CD4-positive, alpha-beta memory T cell (primary cell): ENCODE measurements at regions of chr1 and their contacts with region 1.

Region 1: GRCh38 chr1:227787513-227788270 is 27.8 kb upstream of the PRSS38 start:
- DNase-seq: peak; percentile 91 to 96 (median 93)
- H3K4me3 ChIP-seq: peak overlapping the region; percentile 69 to 89
- H3K4me3 Mint-ChIP-seq: peak overlapping the region; percentile 83 to 89 (median 84)
- H3K27ac ChIP-seq: peak overlapping the region; percentile 53
- H3K27ac Mint-ChIP-seq: peak overlapping the region; percentile 57 to 86 (median 83)
- H3K4me1 ChIP-seq: peaks cover 28% of the 10 kb centered on the region
- H3K4me1 Mint-ChIP-seq: peaks cover 13 to 46% (median 22%) of the 10 kb centered on the region in 4 donors
- H3K27me3 ChIP-seq: no peaks in the 10 kb centered on the region
- H3K27me3 Mint-ChIP-seq: no peaks in the 10 kb centered on the region

Region 2: DNA sequence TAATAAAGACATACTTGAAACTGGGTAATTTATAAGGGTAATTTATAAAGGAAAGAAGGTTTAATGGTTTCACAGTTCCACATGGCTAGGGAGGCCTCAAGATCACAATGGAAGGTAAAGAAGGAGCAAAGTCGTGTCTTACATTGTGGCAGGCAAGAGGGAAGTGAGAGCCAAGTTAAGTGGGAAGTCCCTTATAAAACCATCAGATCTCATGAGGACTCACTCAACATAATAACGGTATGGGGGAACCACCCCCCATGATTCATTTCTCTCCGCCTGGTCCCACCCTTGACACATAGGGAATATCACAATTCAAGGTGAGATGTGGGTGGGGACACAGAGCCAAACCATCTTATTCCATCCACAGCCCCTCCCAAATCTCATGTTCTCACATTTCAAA is 301.1 kb before region 1 on chr1:
- CTCF ChIA-PET with region 1: no interaction called
- POLR2A ChIA-PET with region 1: no interaction called
- intact Hi-C with region 1: no loop called
- DNase-seq: no peak
- H3K4me3 ChIP-seq: no peak overlapping the region
- H3K4me3 Mint-ChIP-seq: no peak overlapping the region
- H3K27ac ChIP-seq: no peak overlapping the region
- H3K27ac Mint-ChIP-seq: no peak overlapping the region
- H3K4me1 ChIP-seq: no peaks in the 10 kb centered on the region
- H3K4me1 Mint-ChIP-seq: no peaks in the 10 kb centered on the region
- H3K27me3 ChIP-seq: no peaks in the 10 kb centered on the region
- H3K27me3 Mint-ChIP-seq: peaks cover under 1 to 7% of the 10 kb centered on the region in 2 donors

Region 3: GRCh38 chr1:227734856-227735538 is 52.7 kb before region 1 on chr1 and contains the starts of genes JMJD4 and SNAP47:
- CTCF ChIA-PET with region 1: no interaction called
- POLR2A ChIA-PET with region 1: interaction called, 5 read pairs
- intact Hi-C with region 1: loop called (anchors 2 kb)
- DNase-seq: peak; percentile 88 to 97 (median 93)
- H3K4me3 ChIP-seq: peak within 1 kb of the TSS; percentile 69 to 80
- H3K4me3 Mint-ChIP-seq: peak within 1 kb of the TSS; percentile 89 to 93 (median 90)
- H3K27ac ChIP-seq: peak within 1 kb of the TSS; percentile 84
- H3K27ac Mint-ChIP-seq: peak within 1 kb of the TSS; percentile 88 to 94 (median 90)
- H3K4me1 ChIP-seq: peaks cover 39% of the 10 kb centered on the region
- H3K4me1 Mint-ChIP-seq: peaks cover 26 to 65% (median 39%) of the 10 kb centered on the region in 4 donors
- H3K27me3 ChIP-seq: no peaks in the 10 kb centered on the region
- H3K27me3 Mint-ChIP-seq: peaks cover 0 to 1% of the 10 kb centered on the region in 2 donors
- total RNA-seq, gene JMJD4: 32.4 to 34.1 TPM
- total RNA-seq, gene SNAP47: 27.0 to 30.5 TPM

Region 4: GRCh38 chr1:227753999-227754711 is 33.5 kb before region 1 on chr1:
- CTCF ChIA-PET with region 1: no interaction called
- POLR2A ChIA-PET with region 1: no interaction called
- intact Hi-C with region 1: no loop called
- DNase-seq: no peak
- H3K4me3 ChIP-seq: no peak overlapping the region
- H3K4me3 Mint-ChIP-seq: no peak overlapping the region
- H3K27ac ChIP-seq: no peak overlapping the region
- H3K27ac Mint-ChIP-seq: peak overlapping the region in 4 of 7 donors; percentile 7 to 73 (median 58)
- H3K4me1 ChIP-seq: peaks cover 24% of the 10 kb centered on the region
- H3K4me1 Mint-ChIP-seq: peaks cover 16 to 57% (median 31%) of the 10 kb centered on the region in 4 donors
- H3K27me3 ChIP-seq: no peaks in the 10 kb centered on the region
- H3K27me3 Mint-ChIP-seq: no peaks in the 10 kb centered on the region

Region 5: GRCh38 chr1:227849251-227849650 is 61.6 kb after region 1 on chr1:
- CTCF ChIA-PET with region 1: no interaction called
- POLR2A ChIA-PET with region 1: no interaction called
- intact Hi-C with region 1: no loop called
- DNase-seq: peak in 2 of 5 donors; percentile 12 to 21
- H3K4me3 ChIP-seq: no peak overlapping the region
- H3K4me3 Mint-ChIP-seq: no peak overlapping the region
- H3K27ac ChIP-seq: no peak overlapping the region
- H3K27ac Mint-ChIP-seq: peak overlapping the region in 4 of 7 donors; percentile 17 to 83 (median 55)
- H3K4me1 ChIP-seq: no peaks in the 10 kb centered on the region
- H3K4me1 Mint-ChIP-seq: peaks cover 0 to 4% (median 3%) of the 10 kb centered on the region in 4 donors
- H3K27me3 ChIP-seq: no peaks in the 10 kb centered on the region
- H3K27me3 Mint-ChIP-seq: peaks cover 0 to 7% of the 10 kb centered on the region in 2 donors

Region 6: DNA sequence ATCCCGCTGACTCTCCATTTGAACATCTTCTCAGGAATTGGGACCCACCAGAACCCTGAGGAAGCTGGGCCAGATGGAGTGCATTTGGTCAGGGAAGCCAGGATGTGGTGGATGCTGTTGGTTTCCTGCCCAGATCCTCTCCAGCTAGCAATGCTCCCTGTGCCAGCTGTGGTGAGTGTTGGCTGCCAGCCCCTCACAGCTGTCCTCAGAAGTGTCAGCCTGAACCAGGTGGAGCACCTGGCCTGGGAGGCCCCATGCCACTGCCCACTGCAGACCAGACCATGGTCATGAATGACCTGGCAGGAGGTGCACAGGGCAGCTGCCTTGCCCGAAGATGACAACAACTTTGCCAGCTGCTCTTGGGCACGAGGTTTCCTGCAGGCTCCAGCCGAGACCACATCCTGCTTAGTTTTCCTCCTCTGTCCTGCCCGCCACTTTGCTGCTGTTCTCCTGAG is 82.2 kb after region 1 on chr1:
- CTCF ChIA-PET with region 1: interaction called, 4 read pairs
- POLR2A ChIA-PET with region 1: interaction called, 15 read pairs
- intact Hi-C with region 1: no loop called
- DNase-seq: peak in 3 of 5 donors; percentile 22 to 31 (median 24)
- H3K4me3 ChIP-seq: peak overlapping the region in 1 of 2 donors; percentile 27
- H3K4me3 Mint-ChIP-seq: peak overlapping the region; percentile 63 to 91 (median 81)
- H3K27ac ChIP-seq: no peak overlapping the region
- H3K27ac Mint-ChIP-seq: peak overlapping the region; percentile 34 to 95 (median 85)
- H3K4me1 ChIP-seq: peaks cover 36% of the 10 kb centered on the region
- H3K4me1 Mint-ChIP-seq: peaks cover 35 to 70% (median 41%) of the 10 kb centered on the region in 4 donors
- H3K27me3 ChIP-seq: no peaks in the 10 kb centered on the region
- H3K27me3 Mint-ChIP-seq: peaks cover 0 to 2% of the 10 kb centered on the region in 2 donors

Region 7: DNA sequence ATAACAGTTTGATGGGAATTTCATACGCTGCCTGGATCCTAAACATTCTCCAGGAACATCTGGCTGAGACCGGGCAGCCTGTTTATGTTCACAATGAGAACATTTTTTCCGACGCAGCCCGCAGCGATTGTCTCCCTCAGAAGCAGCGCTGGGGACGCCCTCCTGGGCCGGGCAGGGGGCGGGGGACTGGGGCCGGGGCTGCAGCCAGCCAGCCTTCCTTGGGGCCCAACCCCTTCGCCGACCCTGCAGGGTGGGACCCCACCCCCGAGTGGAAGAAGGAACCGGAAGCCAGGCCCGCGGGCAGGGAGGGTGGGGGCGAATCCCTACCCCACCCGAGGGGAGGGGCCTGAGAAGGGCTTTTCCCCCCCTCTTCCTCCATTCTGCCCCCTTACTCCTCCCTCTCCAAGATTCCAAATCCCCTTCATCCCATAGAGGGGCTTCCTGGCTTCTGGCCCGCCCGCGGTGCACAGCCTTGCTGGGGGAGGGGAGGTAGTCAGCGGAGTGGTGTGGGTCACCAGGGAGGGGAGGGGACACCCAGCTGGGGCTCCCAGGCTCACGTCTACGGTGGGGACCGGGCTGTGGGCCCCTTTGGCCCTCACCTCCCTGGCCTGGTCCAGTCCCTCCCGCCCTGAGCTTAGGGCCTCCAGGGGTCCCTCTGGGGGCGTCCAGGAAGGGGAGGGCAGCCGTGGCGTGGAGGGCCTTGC is 99.5 kb after region 1 on chr1:
- CTCF ChIA-PET with region 1: no interaction called
- POLR2A ChIA-PET with region 1: interaction called, 6 read pairs
- intact Hi-C with region 1: loop called (anchors 5 kb)
- DNase-seq: peak in 3 of 5 donors; percentile 18 to 29 (median 18)
- H3K4me3 ChIP-seq: peak overlapping the region in 1 of 2 donors; percentile 31
- H3K4me3 Mint-ChIP-seq: peak overlapping the region in 7 of 8 donors; percentile 42 to 68 (median 59)
- H3K27ac ChIP-seq: peak overlapping the region; percentile 40
- H3K27ac Mint-ChIP-seq: peak overlapping the region; percentile 68 to 92 (median 83)
- H3K4me1 ChIP-seq: peaks cover 54% of the 10 kb centered on the region
- H3K4me1 Mint-ChIP-seq: peaks cover 15 to 59% (median 38%) of the 10 kb centered on the region in 4 donors
- H3K27me3 ChIP-seq: no peaks in the 10 kb centered on the region
- H3K27me3 Mint-ChIP-seq: no peaks in the 10 kb centered on the region

Region 8: DNA sequence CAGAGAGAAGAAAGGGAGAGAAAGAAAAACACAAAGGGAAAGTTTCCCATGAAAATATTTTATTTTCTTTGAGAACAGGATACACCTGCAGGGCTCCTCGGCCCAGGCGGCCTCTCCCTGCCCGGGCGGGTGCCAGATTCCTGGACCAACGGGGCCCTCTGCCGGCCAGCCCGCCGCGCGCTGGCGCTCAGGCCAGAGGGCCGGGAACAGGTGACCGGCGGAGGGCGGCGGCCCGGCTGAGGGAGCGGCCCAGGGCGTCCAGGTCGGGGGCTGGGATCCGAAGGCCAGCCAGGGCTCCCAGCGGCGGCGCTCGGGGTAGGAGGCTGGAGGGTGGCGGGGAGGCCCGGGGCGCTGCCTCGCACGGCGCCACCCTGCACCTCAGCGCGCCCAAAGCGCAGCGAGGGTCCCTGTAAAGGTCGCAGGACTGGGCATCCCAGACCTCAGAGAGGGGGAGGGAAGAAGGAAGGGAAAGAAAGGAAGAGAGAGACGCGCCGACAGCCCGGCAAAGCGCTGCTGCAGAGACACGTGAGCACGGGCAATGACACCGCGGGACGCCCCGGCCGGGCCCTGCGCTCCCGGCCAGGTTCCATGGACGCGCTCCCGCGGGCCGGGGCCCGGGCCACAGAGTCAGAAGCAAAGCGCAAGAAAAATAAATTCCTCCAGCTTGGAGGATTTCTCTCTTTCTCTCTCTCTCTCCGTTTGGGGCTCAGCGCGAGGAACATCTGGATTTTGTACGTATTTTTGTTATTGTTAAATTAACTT is 159.1 kb after region 1 on chr1:
- CTCF ChIA-PET with region 1: no interaction called
- POLR2A ChIA-PET with region 1: interaction called, 4 read pairs
- intact Hi-C with region 1: loop called (anchors 1 kb)
- DNase-seq: peak; percentile 36 to 63 (median 50)
- H3K4me3 ChIP-seq: peak overlapping the region; percentile 29 to 43
- H3K4me3 Mint-ChIP-seq: peak overlapping the region; percentile 75 to 84 (median 77)
- H3K27ac ChIP-seq: no peak overlapping the region
- H3K27ac Mint-ChIP-seq: no peak overlapping the region
- H3K4me1 ChIP-seq: peaks cover 18% of the 10 kb centered on the region
- H3K4me1 Mint-ChIP-seq: peaks cover 2 to 14% (median 8%) of the 10 kb centered on the region in 4 donors
- H3K27me3 ChIP-seq: peaks cover 6% of the 10 kb centered on the region
- H3K27me3 Mint-ChIP-seq: peaks cover 3 to 10% of the 10 kb centered on the region in 2 donors

Region 9: DNA sequence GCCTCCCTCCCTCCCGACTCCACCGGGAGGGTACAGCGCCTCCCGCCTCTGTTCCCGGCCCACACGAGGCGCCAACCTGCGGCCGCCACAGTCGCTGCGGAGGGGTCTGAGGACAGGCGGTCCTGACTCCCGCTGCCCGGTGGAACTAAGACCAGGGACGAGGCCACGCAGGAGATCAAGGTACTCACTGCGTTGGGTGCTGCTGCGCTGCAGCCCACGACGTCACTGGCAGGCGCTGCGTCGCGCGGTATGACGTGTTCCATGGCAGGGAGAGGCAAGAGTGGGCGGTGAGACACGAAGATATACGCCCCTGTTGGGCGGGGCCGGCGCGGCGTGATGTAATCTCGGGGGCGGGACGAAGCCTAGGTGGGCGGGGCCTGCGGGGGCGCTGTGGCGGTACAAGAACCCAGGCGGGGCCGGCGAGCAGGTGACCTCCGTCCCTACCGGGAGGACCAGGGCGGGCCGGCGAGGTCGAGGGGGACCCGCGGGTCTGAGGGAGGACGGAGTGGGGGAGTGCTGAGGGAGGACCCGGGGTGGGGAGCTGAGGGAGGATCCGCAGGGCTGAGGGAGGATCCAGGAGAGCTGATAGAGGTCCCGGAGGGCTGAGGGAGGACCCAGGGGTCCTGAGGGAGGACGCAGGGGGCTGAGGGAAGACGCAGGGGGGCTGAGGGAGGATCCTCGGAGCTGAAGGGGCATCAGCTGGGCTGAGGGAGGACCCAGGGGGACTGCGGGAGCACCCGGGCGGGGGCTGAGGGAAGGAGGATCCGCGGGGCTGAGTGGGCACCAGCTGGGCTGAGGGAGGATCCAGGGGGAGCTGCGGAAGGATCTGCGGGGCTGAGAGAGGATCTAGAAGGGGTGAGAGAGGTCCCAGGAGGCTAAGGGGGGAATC is 321.6 kb after region 1 on chr1 and contains the start of gene MRPL55:
- CTCF ChIA-PET with region 1: no interaction called
- POLR2A ChIA-PET with region 1: no interaction called
- intact Hi-C with region 1: loop called (anchors 1 kb)
- DNase-seq: peak; percentile 97 to 99 (median 98)
- H3K4me3 ChIP-seq: peak within 1 kb of the TSS; percentile 68 to 76
- H3K4me3 Mint-ChIP-seq: peak within 1 kb of the TSS; percentile 89 to 98 (median 94)
- H3K27ac ChIP-seq: peak within 1 kb of the TSS; percentile 92
- H3K27ac Mint-ChIP-seq: peak within 1 kb of the TSS; percentile 92 to 98 (median 95)
- H3K4me1 ChIP-seq: peaks cover 21% of the 10 kb centered on the region
- H3K4me1 Mint-ChIP-seq: peaks cover 9 to 45% (median 26%) of the 10 kb centered on the region in 4 donors
- H3K27me3 ChIP-seq: no peaks in the 10 kb centered on the region
- H3K27me3 Mint-ChIP-seq: no peaks in the 10 kb centered on the region
- total RNA-seq, gene MRPL55: 57.8 to 64.5 TPM